CD4-positive, alpha-beta memory T cell (primary cell): ENCODE measurements at regions of chr2 and their contacts with region 1.

Region 1: DNA sequence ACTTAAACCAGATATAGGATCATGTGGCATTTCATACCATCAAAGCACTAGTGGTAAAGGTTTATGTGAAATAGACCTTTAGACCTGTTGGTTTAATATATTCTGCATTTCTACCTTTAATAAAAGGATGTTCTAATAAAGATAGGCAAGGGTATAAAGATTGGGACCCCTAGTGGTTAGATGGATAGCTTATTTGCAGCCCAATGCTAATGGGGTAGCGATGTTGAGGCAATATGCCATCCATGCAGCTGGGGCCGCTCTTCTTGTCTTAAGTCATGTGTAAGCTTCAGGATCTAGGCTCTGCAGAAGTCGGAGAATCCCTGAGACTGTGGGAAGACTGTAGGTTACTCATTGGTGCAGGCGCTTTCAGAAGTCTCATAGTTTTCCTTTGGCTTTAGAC is 114.9 kb downstream of the ICOS start:
- DNase-seq: peak in 4 of 5 donors; percentile 14 to 39 (median 27)
- H3K4me3 ChIP-seq: no peak overlapping the region
- H3K4me3 Mint-ChIP-seq: no peak overlapping the region
- H3K27ac ChIP-seq: no peak overlapping the region
- H3K27ac Mint-ChIP-seq: no peak overlapping the region
- H3K4me1 ChIP-seq: peaks cover 15% of the 10 kb centered on the region
- H3K4me1 Mint-ChIP-seq: peaks cover 9 to 16% (median 12%) of the 10 kb centered on the region in 4 donors
- H3K27me3 ChIP-seq: no peaks in the 10 kb centered on the region
- H3K27me3 Mint-ChIP-seq: peaks cover 0 to 1% of the 10 kb centered on the region in 2 donors

Region 2: DNA sequence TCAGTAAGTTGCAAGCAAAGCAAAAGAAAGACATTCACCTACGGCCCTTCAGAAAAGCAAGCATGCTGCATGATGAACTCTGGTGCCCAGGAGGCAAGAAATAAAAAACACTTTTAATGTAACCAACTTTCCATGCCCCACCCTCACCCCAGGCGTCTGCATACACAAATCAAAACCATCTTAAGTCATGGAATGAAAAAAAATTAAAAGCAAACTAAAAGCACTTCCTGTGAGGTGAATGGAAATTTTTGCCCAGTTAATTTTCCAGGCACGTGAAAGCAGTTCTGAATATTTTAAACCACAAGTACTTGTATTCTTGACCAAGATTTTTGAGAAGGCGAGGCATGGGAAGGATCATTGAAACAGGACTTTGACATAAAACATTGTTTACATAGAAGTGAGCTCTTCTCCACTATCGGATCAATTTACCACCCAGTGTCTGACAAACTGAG is 117.4 kb before region 1 on chr2:
- CTCF ChIA-PET with region 1: interaction called, 91 read pairs
- POLR2A ChIA-PET with region 1: interaction called, 3 read pairs
- intact Hi-C with region 1: loop called (anchors 1 kb)
- DNase-seq: peak in 4 of 5 donors; percentile 40 to 81 (median 58)
- H3K4me3 ChIP-seq: peak overlapping the region; percentile 2 to 41
- H3K4me3 Mint-ChIP-seq: peak overlapping the region; percentile 62 to 91 (median 76)
- H3K27ac ChIP-seq: peak overlapping the region; percentile 53
- H3K27ac Mint-ChIP-seq: peak overlapping the region; percentile 92 to 98 (median 96)
- H3K4me1 ChIP-seq: peaks cover 45% of the 10 kb centered on the region
- H3K4me1 Mint-ChIP-seq: peaks cover 39 to 84% (median 54%) of the 10 kb centered on the region in 4 donors
- H3K27me3 ChIP-seq: no peaks in the 10 kb centered on the region
- H3K27me3 Mint-ChIP-seq: no peaks in the 10 kb centered on the region

Region 3: GRCh38 chr2:204000446-204000845 is 51.0 kb before region 1 on chr2:
- CTCF ChIA-PET with region 1: interaction called, 14 read pairs
- POLR2A ChIA-PET with region 1: interaction called, 5 read pairs
- intact Hi-C with region 1: no loop called
- DNase-seq: peak in 4 of 5 donors; percentile 32 to 57 (median 48)
- H3K4me3 ChIP-seq: no peak overlapping the region
- H3K4me3 Mint-ChIP-seq: peak overlapping the region; percentile 26 to 78 (median 74)
- H3K27ac ChIP-seq: peak overlapping the region; percentile 11
- H3K27ac Mint-ChIP-seq: peak overlapping the region; percentile 20 to 91 (median 81)
- H3K4me1 ChIP-seq: peaks cover 92% of the 10 kb centered on the region
- H3K4me1 Mint-ChIP-seq: peaks cover 79 to 91% (median 85%) of the 10 kb centered on the region in 4 donors
- H3K27me3 ChIP-seq: no peaks in the 10 kb centered on the region
- H3K27me3 Mint-ChIP-seq: no peaks in the 10 kb centered on the region

Region 4: GRCh38 chr2:204030322-204030721 is 21.2 kb before region 1 on chr2:
- CTCF ChIA-PET with region 1: interaction called, 40 read pairs
- POLR2A ChIA-PET with region 1: no interaction called
- intact Hi-C with region 1: loop called (anchors 2 kb)
- DNase-seq: no peak
- H3K4me3 ChIP-seq: no peak overlapping the region
- H3K4me3 Mint-ChIP-seq: no peak overlapping the region
- H3K27ac ChIP-seq: no peak overlapping the region
- H3K27ac Mint-ChIP-seq: no peak overlapping the region
- H3K4me1 ChIP-seq: peaks cover 15% of the 10 kb centered on the region
- H3K4me1 Mint-ChIP-seq: peaks cover 12 to 22% (median 15%) of the 10 kb centered on the region in 4 donors
- H3K27me3 ChIP-seq: no peaks in the 10 kb centered on the region
- H3K27me3 Mint-ChIP-seq: no peaks in the 10 kb centered on the region

Region 5: DNA sequence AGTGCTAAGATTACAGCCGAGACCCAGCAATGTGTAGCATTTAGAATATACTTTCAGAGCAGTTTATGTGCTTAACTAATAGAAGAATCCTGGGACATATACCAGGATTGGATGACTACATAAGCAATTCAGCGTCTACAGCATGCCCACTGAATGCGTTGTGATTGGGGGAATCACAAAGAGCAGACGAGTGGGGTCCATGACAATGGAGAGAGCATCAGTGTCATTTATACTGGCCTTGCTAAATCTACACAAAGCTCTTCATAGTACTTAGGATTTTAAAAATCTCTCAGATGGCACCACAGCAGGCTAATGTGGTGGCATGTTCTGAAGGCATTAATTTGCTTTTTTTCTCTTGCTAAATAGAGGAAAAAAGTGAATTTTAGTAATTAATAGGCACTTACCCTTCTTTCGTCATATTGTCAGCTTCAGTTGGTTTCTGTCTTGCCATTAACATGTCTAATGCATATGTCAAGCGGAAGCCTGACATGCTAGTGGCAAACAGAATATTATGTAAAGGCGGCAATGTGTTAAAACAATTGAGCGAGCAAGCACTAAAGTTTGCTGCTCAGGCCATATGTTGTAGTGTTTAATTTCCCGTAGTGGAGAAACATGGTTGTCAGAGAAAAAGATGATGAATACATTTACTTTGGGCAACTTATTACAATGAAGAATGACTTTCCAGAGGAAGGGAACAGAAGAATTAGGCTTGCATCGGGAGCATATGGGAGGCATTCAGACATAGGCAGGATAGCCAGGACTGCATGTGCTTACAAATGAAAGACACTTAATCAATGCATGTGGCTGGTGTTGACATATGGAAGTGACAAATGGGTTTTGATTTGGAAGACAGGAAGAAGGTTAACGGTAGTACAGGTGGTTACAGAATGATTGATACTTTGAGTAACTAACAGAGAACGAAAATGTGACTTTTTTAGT is 30.3 kb after region 1 on chr2:
- CTCF ChIA-PET with region 1: no interaction called
- POLR2A ChIA-PET with region 1: no interaction called
- intact Hi-C with region 1: no loop called
- DNase-seq: no peak
- H3K4me3 ChIP-seq: no peak overlapping the region
- H3K4me3 Mint-ChIP-seq: no peak overlapping the region
- H3K27ac ChIP-seq: no peak overlapping the region
- H3K27ac Mint-ChIP-seq: no peak overlapping the region
- H3K4me1 ChIP-seq: no peaks in the 10 kb centered on the region
- H3K4me1 Mint-ChIP-seq: peaks cover 0 to 2% (median 0%) of the 10 kb centered on the region in 4 donors
- H3K27me3 ChIP-seq: no peaks in the 10 kb centered on the region
- H3K27me3 Mint-ChIP-seq: peaks cover 0 to 5% of the 10 kb centered on the region in 2 donors